CD8-positive, alpha-beta memory T cell (primary cell): ENCODE measurements at regions of chr19 and their contacts with region 1.

Region 1: DNA sequence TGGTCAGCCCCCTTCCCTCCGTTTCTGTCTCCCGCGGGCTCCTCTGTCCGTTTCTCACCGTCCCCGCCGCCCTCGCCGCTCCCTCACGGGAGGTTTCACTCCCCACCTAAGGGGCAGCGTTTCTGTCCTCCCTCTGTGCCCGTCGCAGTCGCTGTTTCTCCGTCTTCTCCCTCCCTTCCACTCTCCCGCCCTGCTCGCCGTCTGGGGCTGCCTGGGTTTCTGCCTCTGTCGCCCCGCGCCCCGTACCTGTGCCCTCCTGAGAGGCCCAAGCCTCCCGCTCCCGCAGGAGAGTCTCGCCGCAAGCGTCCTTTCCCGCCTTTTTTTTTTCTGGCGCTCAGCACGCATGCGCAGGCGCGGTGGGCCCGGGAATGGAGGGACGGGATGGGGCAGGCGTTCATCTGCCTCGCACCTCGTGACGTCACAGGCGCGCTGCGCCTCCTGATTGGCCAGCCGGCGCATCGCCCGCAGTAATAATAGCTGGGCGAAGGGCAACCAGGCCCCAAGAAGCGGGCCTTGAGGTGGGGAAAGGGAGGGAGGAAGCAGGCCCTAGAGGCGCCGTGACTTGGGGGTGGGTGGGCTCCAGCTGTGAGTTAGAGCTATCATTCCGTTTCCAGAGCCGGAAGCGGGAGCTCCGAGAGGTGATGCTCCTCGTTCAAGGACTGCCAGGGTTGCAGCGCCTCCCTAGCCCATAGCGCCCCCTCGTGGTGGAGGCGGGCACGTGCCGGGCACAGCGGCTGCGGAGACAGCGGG is 15.4 kb downstream of the SSC5D start:
- DNase-seq: peak; percentile 90 to 94 (median 91)
- H3K4me3 ChIP-seq: peak overlapping the region; percentile 82
- H3K4me3 Mint-ChIP-seq: peak overlapping the region; percentile 70 to 94 (median 85)
- H3K27ac ChIP-seq: peak overlapping the region; percentile 51
- H3K27ac Mint-ChIP-seq: peak overlapping the region; percentile 71 to 98 (median 88)
- H3K4me1 ChIP-seq: peaks cover 5% of the 10 kb centered on the region
- H3K4me1 Mint-ChIP-seq: peaks cover 10 to 14% (median 13%) of the 10 kb centered on the region in 3 donors
- H3K27me3 ChIP-seq: no peaks in the 10 kb centered on the region
- H3K27me3 Mint-ChIP-seq: peaks cover 4 to 10% of the 10 kb centered on the region in 2 donors

Region 2: DNA sequence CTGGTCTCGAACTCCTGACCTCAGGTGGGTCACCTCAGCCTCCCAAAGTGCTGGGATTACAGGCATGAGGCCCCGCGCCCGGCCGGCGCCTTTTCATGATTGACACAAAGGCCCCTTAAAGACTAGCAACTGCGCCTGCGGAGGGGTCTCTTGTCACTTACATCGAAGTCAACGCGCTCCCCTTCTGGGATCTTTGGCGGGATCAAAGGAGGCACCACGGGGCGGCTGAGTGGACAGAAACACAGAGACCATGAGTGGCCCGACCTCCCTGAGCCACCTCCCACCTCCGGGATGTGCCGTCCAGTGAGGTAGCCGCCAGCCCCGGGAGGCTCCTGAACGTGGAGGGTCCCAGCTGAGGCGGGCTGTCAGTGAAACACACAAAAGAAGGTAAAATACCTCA is 362.0 kb before region 1 on chr19:
- CTCF ChIA-PET with region 1: interaction called, 80 read pairs
- POLR2A ChIA-PET with region 1: no interaction called
- DNase-seq: no peak
- H3K4me3 ChIP-seq: no peak overlapping the region
- H3K4me3 Mint-ChIP-seq: no peak overlapping the region
- H3K27ac ChIP-seq: no peak overlapping the region
- H3K27ac Mint-ChIP-seq: no peak overlapping the region
- H3K4me1 ChIP-seq: no peaks in the 10 kb centered on the region
- H3K4me1 Mint-ChIP-seq: peaks cover 0 to 9% (median 0%) of the 10 kb centered on the region in 3 donors
- H3K27me3 ChIP-seq: peaks cover 27% of the 10 kb centered on the region
- H3K27me3 Mint-ChIP-seq: peaks cover 51 to 53% of the 10 kb centered on the region in 2 donors

Region 3: GRCh38 chr19:55461259-55461973 is 42.3 kb before region 1 on chr19 and contains the start of gene ISOC2:
- CTCF ChIA-PET with region 1: interaction called, 56 read pairs
- POLR2A ChIA-PET with region 1: no interaction called
- DNase-seq: peak; percentile 100
- H3K4me3 ChIP-seq: peak within 1 kb of the TSS; percentile 93
- H3K4me3 Mint-ChIP-seq: peak within 1 kb of the TSS; percentile 80 to 97 (median 87)
- H3K27ac ChIP-seq: peak within 1 kb of the TSS; percentile 82
- H3K27ac Mint-ChIP-seq: peak within 1 kb of the TSS; percentile 68 to 96 (median 84)
- H3K4me1 ChIP-seq: peaks cover 5% of the 10 kb centered on the region
- H3K4me1 Mint-ChIP-seq: peaks cover 24 to 26% (median 25%) of the 10 kb centered on the region in 3 donors
- H3K27me3 ChIP-seq: no peaks in the 10 kb centered on the region
- H3K27me3 Mint-ChIP-seq: peaks cover 2 to 3% of the 10 kb centered on the region in 2 donors
- total RNA-seq, gene ISOC2: 33.7 to 38.8 TPM

Region 4: GRCh38 chr19:55476100-55476775 is 27.4 kb before region 1 on chr19 and contains the start of gene ZNF628:
- CTCF ChIA-PET with region 1: interaction called, 28 read pairs
- POLR2A ChIA-PET with region 1: interaction called, 5 read pairs
- DNase-seq: peak; percentile 95 to 98 (median 97)
- H3K4me3 ChIP-seq: peak within 1 kb of the TSS; percentile 92
- H3K4me3 Mint-ChIP-seq: peak within 1 kb of the TSS; percentile 89 to 96 (median 90)
- H3K27ac ChIP-seq: peak within 1 kb of the TSS; percentile 72
- H3K27ac Mint-ChIP-seq: peak within 1 kb of the TSS; percentile 92 to 99 (median 94)
- H3K4me1 ChIP-seq: peaks cover 17% of the 10 kb centered on the region
- H3K4me1 Mint-ChIP-seq: peaks cover 17 to 42% (median 32%) of the 10 kb centered on the region in 3 donors
- H3K27me3 ChIP-seq: no peaks in the 10 kb centered on the region
- H3K27me3 Mint-ChIP-seq: no peaks in the 10 kb centered on the region
- total RNA-seq, gene ZNF628: 8.3 to 8.7 TPM

Region 5: DNA sequence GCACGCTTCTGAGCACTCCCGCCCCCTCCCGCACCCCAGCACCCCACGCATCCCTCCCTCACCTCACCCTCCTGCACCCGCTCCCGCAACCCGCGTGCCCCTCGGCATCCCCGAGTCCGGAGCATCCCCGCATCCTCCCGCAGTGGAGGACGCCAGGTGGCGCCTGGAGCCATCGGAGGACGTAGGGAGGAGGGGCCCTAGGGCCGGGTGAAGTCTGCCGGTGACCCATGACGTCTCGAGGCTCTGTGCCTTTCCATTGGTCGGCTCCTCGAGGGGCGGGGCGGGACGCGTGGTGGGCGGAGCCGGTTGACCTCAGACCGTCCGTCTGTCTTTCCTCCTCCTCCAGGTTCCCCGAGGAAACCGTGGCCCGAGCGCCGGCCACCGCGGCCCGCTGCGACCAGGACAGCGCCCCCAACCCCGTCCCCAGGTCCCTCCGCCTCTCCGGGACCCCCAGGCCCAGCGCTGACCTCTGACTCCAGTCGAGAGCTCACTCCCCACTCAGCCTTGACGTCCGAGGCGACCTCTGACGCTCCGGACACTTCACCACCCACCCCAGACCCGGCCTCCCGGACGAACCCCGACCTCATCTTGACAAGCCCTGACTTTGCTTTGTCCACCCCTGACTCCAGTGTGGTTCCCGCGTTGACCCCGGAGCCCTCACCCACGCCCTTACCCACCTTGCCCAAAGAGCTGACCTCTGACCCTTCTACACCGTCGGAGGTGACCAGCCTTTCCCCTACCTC is 13.4 kb after region 1 on chr19:
- CTCF ChIA-PET with region 1: interaction called, 12 read pairs
- POLR2A ChIA-PET with region 1: no interaction called
- DNase-seq: peak; percentile 85 to 93 (median 86)
- H3K4me3 ChIP-seq: peak overlapping the region; percentile 38
- H3K4me3 Mint-ChIP-seq: peak overlapping the region; percentile 51 to 84 (median 81)
- H3K27ac ChIP-seq: no peak overlapping the region
- H3K27ac Mint-ChIP-seq: peak overlapping the region; percentile 27 to 94 (median 86)
- H3K4me1 ChIP-seq: peaks cover 5% of the 10 kb centered on the region
- H3K4me1 Mint-ChIP-seq: peaks cover 3 to 4% (median 4%) of the 10 kb centered on the region in 3 donors
- H3K27me3 ChIP-seq: no peaks in the 10 kb centered on the region
- H3K27me3 Mint-ChIP-seq: peaks cover 3 to 15% of the 10 kb centered on the region in 2 donors

Region 6: DNA sequence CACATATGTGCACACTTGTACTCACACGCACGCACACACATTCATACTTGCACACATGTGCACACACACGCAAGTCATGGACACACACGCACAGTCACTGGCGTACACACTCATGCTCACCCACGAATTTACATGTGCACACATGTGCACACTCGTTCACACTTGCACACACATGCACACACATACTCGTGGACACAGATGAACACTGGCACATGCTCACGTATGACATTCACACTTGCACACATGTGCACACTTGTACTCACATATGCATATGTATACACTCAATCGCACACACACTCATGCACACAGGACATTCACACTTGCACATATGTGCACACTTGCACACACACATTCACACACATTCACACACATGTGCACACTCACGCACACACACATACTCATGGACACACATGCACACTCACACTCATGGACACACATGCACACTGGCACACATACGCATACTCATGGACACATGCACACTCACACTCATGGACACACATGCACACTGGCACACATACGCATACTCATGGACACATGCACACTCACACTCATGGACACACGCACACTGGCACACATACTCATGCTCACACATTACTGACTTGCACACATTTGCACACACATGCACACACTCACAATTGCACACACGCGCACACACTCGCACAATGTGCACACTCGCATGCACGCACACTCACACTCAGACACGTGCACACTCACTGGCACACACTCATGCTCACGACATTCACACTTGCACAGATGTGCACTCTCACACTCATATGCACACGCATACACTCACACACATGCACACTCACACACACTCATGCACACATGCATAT is 23.7 kb after region 1 on chr19:
- CTCF ChIA-PET with region 1: no interaction called
- POLR2A ChIA-PET with region 1: no interaction called
- DNase-seq: no peak
- H3K4me3 ChIP-seq: no peak overlapping the region
- H3K4me3 Mint-ChIP-seq: no peak overlapping the region
- H3K27ac ChIP-seq: no peak overlapping the region
- H3K27ac Mint-ChIP-seq: no peak overlapping the region
- H3K4me1 ChIP-seq: no peaks in the 10 kb centered on the region
- H3K4me1 Mint-ChIP-seq: no peaks in the 10 kb centered on the region
- H3K27me3 ChIP-seq: no peaks in the 10 kb centered on the region
- H3K27me3 Mint-ChIP-seq: peaks cover 1 to 8% of the 10 kb centered on the region in 2 donors

Region 7: DNA sequence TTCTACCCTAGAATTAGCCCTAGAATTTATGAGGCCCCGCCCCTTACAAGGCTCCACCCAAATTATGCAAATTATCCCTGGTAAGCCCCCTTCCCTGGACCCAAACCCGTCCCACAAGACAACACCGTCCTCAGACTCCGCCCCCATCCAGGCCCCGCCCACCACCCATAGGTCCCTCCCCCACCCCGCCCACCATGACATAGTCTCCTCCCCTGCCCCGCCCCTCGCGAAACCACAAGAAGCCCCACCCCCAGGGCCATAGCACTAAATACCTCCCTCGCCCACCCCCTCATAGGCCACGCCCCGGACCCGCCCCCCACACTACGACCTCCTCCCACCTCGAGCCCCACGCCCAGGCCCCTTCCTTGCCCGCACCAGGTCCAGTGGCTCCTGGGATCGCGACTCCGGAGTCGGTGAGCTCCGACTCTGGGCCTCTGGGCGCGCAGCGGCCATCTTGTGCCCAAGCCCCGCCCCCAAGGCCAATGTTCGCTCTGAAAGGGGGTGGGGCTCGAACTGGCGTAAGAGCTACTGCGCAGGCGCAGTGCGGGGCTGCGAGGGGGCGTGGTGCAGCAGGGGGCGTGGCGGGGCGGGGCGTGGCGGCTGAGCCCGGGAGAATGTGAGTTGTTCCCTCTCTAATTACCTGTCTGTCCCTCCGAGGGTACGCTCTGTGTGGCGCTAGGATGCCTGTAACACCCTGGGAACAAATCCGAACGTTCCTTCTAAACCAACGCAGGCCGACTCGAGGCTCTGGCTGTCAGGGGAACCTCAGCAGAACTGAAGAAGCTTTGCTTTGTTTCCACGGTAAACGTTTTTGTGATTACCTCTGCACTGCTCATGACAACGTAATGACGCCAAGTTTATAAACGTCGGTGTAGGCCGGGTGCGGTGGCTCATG is 120.7 kb after region 1 on chr19 and contains the start of gene ZNF784:
- CTCF ChIA-PET with region 1: interaction called, 25 read pairs
- POLR2A ChIA-PET with region 1: no interaction called
- DNase-seq: peak; percentile 90 to 96 (median 91)
- H3K4me3 ChIP-seq: peak within 1 kb of the TSS; percentile 63
- H3K4me3 Mint-ChIP-seq: peak within 1 kb of the TSS; percentile 86 to 96 (median 90)
- H3K27ac ChIP-seq: peak within 1 kb of the TSS; percentile 65
- H3K27ac Mint-ChIP-seq: peak within 1 kb of the TSS; percentile 91 to 99 (median 94)
- H3K4me1 ChIP-seq: peaks cover 47% of the 10 kb centered on the region
- H3K4me1 Mint-ChIP-seq: peaks cover 45 to 63% (median 60%) of the 10 kb centered on the region in 3 donors
- H3K27me3 ChIP-seq: no peaks in the 10 kb centered on the region
- H3K27me3 Mint-ChIP-seq: no peaks in the 10 kb centered on the region
- total RNA-seq, gene ZNF784: 2.6 to 2.9 TPM